Activated CD4-positive, alpha-beta T cell treated with anti-CD3 and anti-CD28 coated beads, Interleukin-2, amount 10 ng/mL, durations not matched to agents 7 days and 5 days (primary cell): ENCODE measurements at regions of chr11 and their contacts with region 1.

Region 1: DNA sequence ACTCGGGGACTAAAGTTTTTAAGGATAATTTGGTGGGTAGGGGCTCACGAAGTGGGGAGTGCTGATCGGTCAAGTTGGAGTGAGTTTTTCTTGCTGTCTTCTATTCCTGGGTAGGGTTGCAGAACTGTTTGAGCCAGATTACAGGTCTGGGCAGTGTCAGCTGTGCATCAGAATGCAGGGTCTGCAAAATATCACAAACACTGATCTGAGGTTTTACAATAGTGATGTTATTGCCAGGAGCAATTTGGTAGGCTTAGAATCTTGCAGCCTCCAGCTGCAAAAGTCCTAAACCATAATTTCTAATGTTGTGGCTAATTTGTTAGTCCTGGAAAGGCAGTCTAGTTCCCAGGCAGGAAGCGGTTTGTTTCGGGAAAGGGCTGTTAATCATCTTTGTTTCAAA is 39.6 kb upstream of the CALCA start:
- DNase-seq: no peak
- H3K4me3 Mint-ChIP-seq: no peak overlapping the region
- H3K27ac Mint-ChIP-seq: no peak overlapping the region
- H3K4me1 Mint-ChIP-seq: no peaks in the 10 kb centered on the region
- H3K27me3 Mint-ChIP-seq: peaks cover 43% of the 10 kb centered on the region

Region 2: GRCh38 chr11:14542324-14542723 is 469.5 kb before region 1 on chr11:
- CTCF ChIA-PET with region 1: no interaction called
- POLR2A ChIA-PET with region 1: interaction called, 13 read pairs
- DNase-seq: no peak
- H3K4me3 Mint-ChIP-seq: no peak overlapping the region
- H3K27ac Mint-ChIP-seq: no peak overlapping the region
- H3K4me1 Mint-ChIP-seq: peaks cover 63% of the 10 kb centered on the region
- H3K27me3 Mint-ChIP-seq: no peaks in the 10 kb centered on the region

Region 3: GRCh38 chr11:14967581-14968243 is 44.1 kb before region 1 on chr11:
- CTCF ChIA-PET with region 1: no interaction called
- POLR2A ChIA-PET with region 1: no interaction called
- DNase-seq: no peak
- H3K4me3 Mint-ChIP-seq: no peak overlapping the region
- H3K27ac Mint-ChIP-seq: no peak overlapping the region
- H3K4me1 Mint-ChIP-seq: peaks cover 5% of the 10 kb centered on the region
- H3K27me3 Mint-ChIP-seq: peaks cover 42% of the 10 kb centered on the region

Region 4: GRCh38 chr11:15059132-15059915 is 47.5 kb after region 1 on chr11:
- CTCF ChIA-PET with region 1: no interaction called
- POLR2A ChIA-PET with region 1: no interaction called
- DNase-seq: no peak
- H3K4me3 Mint-ChIP-seq: no peak overlapping the region
- H3K27ac Mint-ChIP-seq: no peak overlapping the region
- H3K4me1 Mint-ChIP-seq: no peaks in the 10 kb centered on the region
- H3K27me3 Mint-ChIP-seq: peaks cover 12% of the 10 kb centered on the region